Calu3 (cell line): ENCODE measurements at regions of chr9 and their contacts with region 1.

Region 1: DNA sequence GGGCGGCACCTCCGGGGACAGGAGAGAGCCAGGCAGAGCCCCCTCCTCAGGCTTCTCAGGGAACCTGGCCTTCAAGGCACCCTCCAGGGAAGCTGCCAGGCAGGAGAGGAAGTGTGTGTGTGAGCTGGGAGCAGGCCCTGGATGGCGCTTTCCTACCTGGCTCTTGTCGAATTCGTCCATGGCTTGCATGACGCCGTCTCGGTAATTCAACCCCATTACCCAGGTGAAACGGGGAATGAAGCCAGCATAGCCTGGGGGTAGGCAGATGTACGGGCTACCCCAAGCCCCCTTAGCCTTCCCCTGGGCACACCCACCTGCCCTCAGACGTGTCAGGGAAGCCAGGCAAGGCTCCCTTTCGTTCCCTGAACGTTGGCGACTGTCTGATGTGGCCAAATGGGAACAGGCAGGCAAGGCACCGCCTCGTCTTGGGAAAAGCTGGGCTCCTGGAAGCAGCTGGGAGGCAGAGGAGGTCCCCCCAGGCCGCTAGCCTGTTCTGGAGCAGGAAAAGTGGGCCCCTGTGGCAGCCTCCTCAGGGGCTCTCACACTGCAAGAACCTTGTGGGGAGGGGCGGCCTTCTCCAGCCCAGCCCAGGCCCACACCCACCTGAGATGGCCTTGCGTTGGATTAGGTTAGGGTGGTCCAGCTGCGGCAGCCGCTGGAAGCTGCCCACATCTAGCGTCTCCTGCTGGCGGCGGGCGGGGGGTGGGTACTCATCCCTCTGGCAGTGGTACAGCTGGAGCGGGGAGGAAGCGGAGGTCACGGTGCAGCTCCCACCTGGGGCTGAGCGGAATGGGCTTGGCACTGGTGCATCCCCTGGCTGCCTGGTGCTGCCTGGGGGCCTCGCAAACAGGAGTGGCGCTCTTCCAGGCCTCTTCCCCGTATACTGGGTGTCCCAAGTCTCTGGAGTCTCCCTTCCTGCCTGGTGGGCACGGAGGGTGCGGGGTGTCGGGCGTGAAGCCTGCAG is 3.7 kb downstream of the TUBB4B start:
- DNase-seq: no peak
- H3K4me3 Mint-ChIP-seq: peak overlapping the region; percentile 76
- H3K27ac Mint-ChIP-seq: peak overlapping the region; percentile 55
- H3K4me1 Mint-ChIP-seq: peaks cover 9% of the 10 kb centered on the region
- H3K27me3 Mint-ChIP-seq: peaks cover 12% of the 10 kb centered on the region
- CTCF ChIP-seq: no peak

Region 2: DNA sequence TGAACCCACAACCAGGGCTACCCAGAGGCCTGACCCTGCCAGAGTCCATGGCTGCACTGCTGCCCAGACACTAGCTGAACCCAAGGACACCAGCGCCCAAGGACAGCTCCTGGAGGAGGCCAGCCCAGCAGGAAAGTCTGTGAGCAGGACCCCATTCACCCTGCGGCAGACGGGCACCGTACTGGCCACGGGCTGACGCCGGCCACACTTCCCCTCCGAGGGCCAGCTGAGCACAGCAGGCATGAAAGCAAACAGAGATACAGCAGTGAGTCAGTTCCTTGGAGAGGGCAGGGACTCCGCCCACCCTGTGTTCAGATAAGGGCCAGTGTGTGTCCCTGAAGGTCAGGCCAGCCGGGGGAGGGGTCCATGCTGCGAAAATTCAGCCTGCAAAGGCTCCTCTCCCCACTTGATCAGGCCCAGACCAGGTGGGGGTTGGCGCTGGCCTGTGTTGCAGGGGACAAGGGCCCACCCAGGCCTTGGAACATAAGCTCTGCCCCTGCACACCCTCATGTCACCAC is 26.0 kb before region 1 on chr9:
- CTCF ChIA-PET with region 1: interaction called, 14 read pairs
- intact Hi-C with region 1: no loop called
- DNase-seq: peak; percentile 70
- H3K4me3 Mint-ChIP-seq: peak overlapping the region; percentile 36
- H3K27ac Mint-ChIP-seq: peak overlapping the region; percentile 63
- H3K4me1 Mint-ChIP-seq: no peaks in the 10 kb centered on the region
- H3K27me3 Mint-ChIP-seq: no peaks in the 10 kb centered on the region
- CTCF ChIP-seq: no peak